ENCODE measurements at regions of chr4 and their contacts with region 1.

Region 1: GRCh38 chr4:54254116-54254914 is 25.2 kb downstream of the PDGFRA start:
- DNase-seq: peak in 1 of 5 donors; percentile 44
- H3K4me3 ChIP-seq: no peak overlapping the region
- H3K27ac ChIP-seq: no peak overlapping the region
- H3K4me1 ChIP-seq: peaks cover 21% of the 10 kb centered on the region
- H3K27me3 ChIP-seq: no peaks in the 10 kb centered on the region
- CTCF ChIP-seq: no peak
- EP300 ChIP-seq: no peak
- POLR2A ChIP-seq: no peak

Region 2: DNA sequence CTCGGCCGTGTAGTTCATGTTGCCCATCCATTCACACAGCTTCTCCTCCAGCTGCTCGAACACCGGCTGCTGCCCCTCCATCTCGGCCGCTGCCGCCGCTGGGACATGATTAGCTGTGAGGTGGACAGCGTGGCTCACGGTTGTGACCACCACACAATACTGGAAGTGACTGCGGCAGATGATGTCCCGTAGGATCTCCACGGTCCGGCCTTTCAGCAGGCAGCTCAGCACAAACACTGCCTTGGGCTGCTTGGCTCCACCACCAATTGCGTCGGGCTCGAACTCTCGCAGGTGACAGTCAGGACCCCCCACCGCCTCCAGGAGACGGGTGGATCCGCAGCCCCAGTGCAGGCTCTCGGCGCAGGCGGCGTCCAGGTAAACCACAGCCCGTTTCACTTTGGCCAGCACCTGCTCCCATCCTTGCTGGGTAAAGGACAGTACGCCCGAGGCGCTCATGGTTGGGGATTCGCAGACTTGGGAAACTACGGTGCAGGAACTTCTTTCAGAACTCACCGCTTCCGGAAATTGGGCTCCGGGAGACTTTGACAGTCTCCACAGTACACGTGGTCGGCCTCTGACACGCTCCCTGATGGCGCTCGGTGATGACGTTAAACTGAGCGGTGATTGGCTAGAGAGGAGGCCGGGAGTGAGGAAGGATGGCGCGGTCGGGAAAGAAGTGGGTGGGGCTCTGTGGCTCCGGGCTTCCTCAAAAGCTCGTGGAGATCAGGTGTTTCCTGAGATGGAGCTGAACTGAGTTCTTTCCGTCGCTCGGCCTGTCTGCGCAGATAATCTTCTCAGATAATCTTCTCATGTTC is 888.6 kb before region 1 on chr4 and contains the start of gene SCFD2:
- intact Hi-C with region 1: loop called in 1 of 4 experiments (anchors 10 kb)
- DNase-seq: peak; percentile 97 to 98 (median 97)
- H3K4me3 ChIP-seq: peak within 1 kb of the TSS; percentile 64
- H3K27ac ChIP-seq: peak within 1 kb of the TSS in 1 of 2 donors; percentile 34
- H3K4me1 ChIP-seq: peaks cover 1% of the 10 kb centered on the region
- H3K27me3 ChIP-seq: no peaks in the 10 kb centered on the region
- CTCF ChIP-seq: no peak
- EP300 ChIP-seq: no peak
- POLR2A ChIP-seq: peak; percentile 23
- total RNA-seq, gene SCFD2: 10.1 to 42.1 (median 13.5) TPM

Region 3: DNA sequence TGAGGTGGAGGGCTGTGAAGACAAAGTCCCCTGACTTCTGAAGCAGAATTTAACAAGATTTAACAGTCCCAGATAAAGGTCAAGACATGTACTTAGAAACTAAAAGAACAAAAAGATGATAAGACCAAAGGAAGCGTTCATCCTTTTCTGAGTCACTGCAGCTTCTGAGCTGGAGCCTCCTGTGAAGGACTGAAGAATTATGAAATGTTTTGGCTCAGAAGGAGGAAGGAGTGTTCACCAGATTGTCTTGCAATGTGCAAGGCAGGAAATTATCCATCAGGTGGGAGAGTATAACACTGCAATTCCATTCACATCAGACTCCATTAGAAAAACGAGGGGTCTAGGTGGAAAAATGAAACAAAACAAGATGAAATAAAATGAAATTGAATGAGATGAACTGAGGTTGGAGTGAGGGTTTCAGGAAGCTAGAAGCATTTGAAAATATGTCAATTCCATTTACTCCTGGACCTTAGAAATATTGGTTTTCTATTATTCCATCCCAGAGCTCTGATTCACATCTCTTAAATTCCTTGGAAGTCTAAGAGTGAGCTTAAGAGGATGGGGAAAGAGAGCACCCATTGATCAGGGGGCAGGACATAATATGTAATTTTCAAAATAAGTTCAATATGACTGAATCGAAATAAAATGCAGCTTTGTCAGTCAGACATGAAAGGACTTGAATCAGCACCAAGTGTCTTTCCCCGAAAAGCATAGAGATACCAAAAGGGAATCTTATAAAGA is 476.9 kb before region 1 on chr4:
- intact Hi-C with region 1: no loop called
- DNase-seq: peak in 2 of 5 donors; percentile 37 to 47
- H3K4me3 ChIP-seq: no peak overlapping the region
- H3K27ac ChIP-seq: no peak overlapping the region
- H3K4me1 ChIP-seq: peaks cover 3% of the 10 kb centered on the region
- H3K27me3 ChIP-seq: no peaks in the 10 kb centered on the region
- CTCF ChIP-seq: no peak
- EP300 ChIP-seq: no peak
- POLR2A ChIP-seq: no peak

Measured in ovary (tissue), 10 donors.